Activated naive CD4-positive, alpha-beta T cell treated with anti-CD3 and anti-CD28 coated beads for 36 hours (primary cell): ENCODE measurements at regions of chr2 and their contacts with region 1.

Region 1: GRCh38 chr2:73926493-73927338 is at the start of gene DGUOK:
- DNase-seq: peak; percentile 99
- H3K4me3 Mint-ChIP-seq: peak within 1 kb of the TSS; percentile 87
- H3K27ac Mint-ChIP-seq: peak within 1 kb of the TSS; percentile 94
- H3K4me1 Mint-ChIP-seq: peaks cover 44% of the 10 kb centered on the region
- H3K27me3 Mint-ChIP-seq: no peaks in the 10 kb centered on the region
- total RNA-seq, gene DGUOK: 112 to 115 TPM

Region 2: GRCh38 chr2:73859721-73860586 is 66.8 kb before region 1 on chr2:
- CTCF ChIA-PET with region 1: no interaction called
- intact Hi-C with region 1: loop called (anchors 1 kb)
- DNase-seq: peak; percentile 73
- H3K4me3 Mint-ChIP-seq: no peak overlapping the region
- H3K27ac Mint-ChIP-seq: no peak overlapping the region
- H3K4me1 Mint-ChIP-seq: peaks cover 15% of the 10 kb centered on the region
- H3K27me3 Mint-ChIP-seq: no peaks in the 10 kb centered on the region

Region 3: GRCh38 chr2:73870084-73870483 is 56.6 kb before region 1 on chr2:
- CTCF ChIA-PET with region 1: no interaction called
- intact Hi-C with region 1: no loop called
- DNase-seq: no peak
- H3K4me3 Mint-ChIP-seq: no peak overlapping the region
- H3K27ac Mint-ChIP-seq: no peak overlapping the region
- H3K4me1 Mint-ChIP-seq: no peaks in the 10 kb centered on the region
- H3K27me3 Mint-ChIP-seq: no peaks in the 10 kb centered on the region

Region 4: DNA sequence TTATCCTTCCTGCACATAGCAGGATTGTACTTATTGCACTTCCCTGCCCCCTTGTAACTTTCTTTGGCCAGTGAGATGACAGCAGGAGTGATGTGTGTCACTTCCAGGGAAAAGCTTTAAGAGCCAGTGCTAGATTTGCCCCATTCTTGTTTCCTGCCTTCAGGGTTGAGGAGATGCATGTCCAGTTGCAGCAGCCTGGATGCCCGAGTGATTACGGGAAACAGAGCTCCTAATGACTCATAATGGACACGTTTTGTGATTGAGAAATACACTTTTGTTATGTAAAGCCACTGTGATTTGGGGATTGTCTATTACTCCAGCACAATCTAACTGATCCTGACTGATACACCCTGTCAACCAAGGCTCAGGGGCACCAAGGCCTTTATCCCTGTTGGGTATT is 53.0 kb after region 1 on chr2:
- CTCF ChIA-PET with region 1: no interaction called
- intact Hi-C with region 1: loop called (anchors 1 kb)
- DNase-seq: peak; percentile 32
- H3K4me3 Mint-ChIP-seq: peak overlapping the region; percentile 53
- H3K27ac Mint-ChIP-seq: peak overlapping the region; percentile 88
- H3K4me1 Mint-ChIP-seq: peaks cover 62% of the 10 kb centered on the region
- H3K27me3 Mint-ChIP-seq: no peaks in the 10 kb centered on the region

Region 5: DNA sequence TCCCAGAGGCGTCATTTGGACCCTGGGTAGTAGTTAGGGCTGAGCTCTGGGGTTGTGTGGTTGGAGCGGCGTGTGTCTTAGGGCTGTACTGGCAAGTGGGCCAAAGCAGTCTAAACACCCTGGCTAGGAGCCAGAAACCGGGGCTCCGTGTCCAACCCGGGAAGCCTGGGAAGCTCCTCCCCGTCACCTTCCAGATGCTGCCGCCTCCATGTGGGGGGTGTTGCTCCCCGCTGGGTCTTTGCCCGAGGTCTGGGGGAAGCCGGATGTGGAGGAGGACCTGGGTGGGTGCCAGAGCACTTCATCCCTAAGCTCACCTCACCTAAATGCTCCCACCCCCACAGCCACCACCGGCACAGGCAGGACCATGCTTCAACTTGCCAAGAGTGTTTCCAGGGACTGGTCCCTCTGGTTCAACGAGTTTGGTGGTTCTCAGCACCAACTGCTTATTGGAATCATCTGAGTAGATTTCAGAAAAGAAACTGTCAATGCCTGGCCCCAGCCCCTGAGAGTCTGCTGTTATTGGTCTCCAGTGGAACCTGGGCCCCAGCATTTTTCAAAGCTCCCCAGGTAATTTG is 83.5 kb after region 1 on chr2:
- CTCF ChIA-PET with region 1: no interaction called
- intact Hi-C with region 1: no loop called
- DNase-seq: no peak
- H3K4me3 Mint-ChIP-seq: no peak overlapping the region
- H3K27ac Mint-ChIP-seq: peak overlapping the region; percentile 1
- H3K4me1 Mint-ChIP-seq: peaks cover 41% of the 10 kb centered on the region
- H3K27me3 Mint-ChIP-seq: no peaks in the 10 kb centered on the region

Region 6: GRCh38 chr2:74653985-74654882 is 727.5 kb after region 1 on chr2 and contains the start of gene SEMA4F:
- CTCF ChIA-PET with region 1: no interaction called
- intact Hi-C with region 1: no loop called
- DNase-seq: peak; percentile 97
- H3K4me3 Mint-ChIP-seq: peak within 1 kb of the TSS; percentile 72
- H3K27ac Mint-ChIP-seq: peak within 1 kb of the TSS; percentile 33
- H3K4me1 Mint-ChIP-seq: peaks cover 11% of the 10 kb centered on the region
- H3K27me3 Mint-ChIP-seq: peaks cover under 1% of the 10 kb centered on the region
- total RNA-seq, gene SEMA4F: 4.3 to 5.3 TPM